CD8-positive, alpha-beta T cell (primary cell): ENCODE measurements at regions of chr11 and their contacts with region 1.

Region 1: GRCh38 chr11:99449345-99449744 is 428.6 kb downstream of the CNTN5 start:
- DNase-seq: no peak
- ATAC-seq: no peak
- H3K4me3 ChIP-seq: no peak overlapping the region
- H3K4me3 Mint-ChIP-seq: no peak overlapping the region
- H3K27ac ChIP-seq: no peak overlapping the region
- H3K27ac Mint-ChIP-seq: no peak overlapping the region
- H3K4me1 ChIP-seq: no peaks in the 10 kb centered on the region
- H3K4me1 Mint-ChIP-seq: no peaks in the 10 kb centered on the region
- H3K27me3 ChIP-seq: no peaks in the 10 kb centered on the region
- H3K27me3 Mint-ChIP-seq: no peaks in the 10 kb centered on the region
- CTCF ChIP-seq: no peak

Region 2: DNA sequence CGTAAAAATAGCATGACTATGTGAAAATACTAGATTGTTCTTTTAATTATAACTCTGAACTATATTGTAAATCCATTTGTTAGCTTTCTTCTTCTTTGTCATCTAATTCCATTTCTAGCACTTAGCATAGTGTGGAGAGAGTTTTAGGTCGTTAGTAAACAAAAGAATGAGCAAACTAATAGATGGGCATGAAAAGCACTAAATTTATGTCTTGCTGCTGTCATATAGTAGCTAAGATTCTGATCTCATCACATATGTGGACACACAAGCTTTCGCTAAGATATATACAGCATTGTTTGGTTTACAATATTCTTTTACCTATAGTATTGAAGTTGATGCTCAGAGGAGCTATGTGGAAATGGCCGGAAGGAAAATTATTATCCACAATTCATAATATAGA is 58.1 kb before region 1 on chr11:
- CTCF ChIA-PET with region 1: no interaction called
- POLR2A ChIA-PET with region 1: no interaction called
- intact Hi-C with region 1: loop called in 1 of 2 experiments (anchors 5 kb)
- DNase-seq: no peak
- ATAC-seq: no peak
- H3K4me3 ChIP-seq: no peak overlapping the region
- H3K4me3 Mint-ChIP-seq: no peak overlapping the region
- H3K27ac ChIP-seq: no peak overlapping the region
- H3K27ac Mint-ChIP-seq: no peak overlapping the region
- H3K4me1 ChIP-seq: no peaks in the 10 kb centered on the region
- H3K4me1 Mint-ChIP-seq: no peaks in the 10 kb centered on the region
- H3K27me3 ChIP-seq: no peaks in the 10 kb centered on the region
- H3K27me3 Mint-ChIP-seq: no peaks in the 10 kb centered on the region
- CTCF ChIP-seq: no peak

Region 3: GRCh38 chr11:99422581-99423427 is 26.5 kb before region 1 on chr11:
- CTCF ChIA-PET with region 1: no interaction called
- POLR2A ChIA-PET with region 1: no interaction called
- intact Hi-C with region 1: no loop called
- DNase-seq: no peak
- ATAC-seq: no peak
- H3K4me3 ChIP-seq: no peak overlapping the region
- H3K4me3 Mint-ChIP-seq: no peak overlapping the region
- H3K27ac ChIP-seq: no peak overlapping the region
- H3K27ac Mint-ChIP-seq: no peak overlapping the region
- H3K4me1 ChIP-seq: no peaks in the 10 kb centered on the region
- H3K4me1 Mint-ChIP-seq: no peaks in the 10 kb centered on the region
- H3K27me3 ChIP-seq: no peaks in the 10 kb centered on the region
- H3K27me3 Mint-ChIP-seq: no peaks in the 10 kb centered on the region
- CTCF ChIP-seq: no peak

Region 4: DNA sequence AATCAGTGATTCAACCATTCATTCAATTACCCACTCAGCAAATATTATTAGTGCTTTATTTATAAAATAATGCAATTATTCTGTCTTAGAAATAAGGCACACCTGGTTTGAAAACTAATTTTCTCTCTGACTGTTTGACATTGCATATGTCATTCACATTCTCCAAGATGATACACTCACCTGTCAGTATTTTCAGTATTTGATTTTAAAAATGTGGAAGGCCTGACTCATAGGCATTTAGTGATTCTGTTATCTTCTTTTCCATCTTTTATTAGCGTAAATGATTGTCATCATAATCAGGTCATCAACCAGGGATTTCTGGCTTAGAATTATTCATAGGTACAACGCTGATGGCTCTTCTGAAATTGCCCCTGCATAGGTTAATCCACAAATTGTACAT is 52.3 kb after region 1 on chr11:
- CTCF ChIA-PET with region 1: no interaction called
- POLR2A ChIA-PET with region 1: no interaction called
- intact Hi-C with region 1: no loop called
- DNase-seq: no peak
- ATAC-seq: no peak
- H3K4me3 ChIP-seq: no peak overlapping the region
- H3K4me3 Mint-ChIP-seq: no peak overlapping the region
- H3K27ac ChIP-seq: no peak overlapping the region
- H3K27ac Mint-ChIP-seq: no peak overlapping the region
- H3K4me1 ChIP-seq: no peaks in the 10 kb centered on the region
- H3K4me1 Mint-ChIP-seq: no peaks in the 10 kb centered on the region
- H3K27me3 ChIP-seq: no peaks in the 10 kb centered on the region
- H3K27me3 Mint-ChIP-seq: no peaks in the 10 kb centered on the region
- CTCF ChIP-seq: no peak